A549 (cell line): ENCODE measurements at regions of chr2 and their contacts with region 1.

Region 1: GRCh38 chr2:86440631-86441391 is at the start of gene KDM3A:
- DNase-seq: peak; percentile 93 to 100
- ATAC-seq: peak; percentile 89 to 93
- H3K4me3 ChIP-seq: peak within 1 kb of the TSS; percentile 71
- H3K27ac ChIP-seq: peak within 1 kb of the TSS; percentile 94 to 96
- H3K4me1 ChIP-seq: peaks cover 8% of the 10 kb centered on the region
- CTCF ChIP-seq: no peak
- EP300 ChIP-seq: peak in 1 of 2 experiments; percentile 58; a peak in 1 of 5 replicates
- POLR2A ChIP-seq: no peak
- RAD21 ChIP-seq: no peak; a peak in 2 of 5 replicates
- polyA plus RNA-seq, gene KDM3A: 53.7 and 57.0 TPM in 2 replicates

Region 2: DNA sequence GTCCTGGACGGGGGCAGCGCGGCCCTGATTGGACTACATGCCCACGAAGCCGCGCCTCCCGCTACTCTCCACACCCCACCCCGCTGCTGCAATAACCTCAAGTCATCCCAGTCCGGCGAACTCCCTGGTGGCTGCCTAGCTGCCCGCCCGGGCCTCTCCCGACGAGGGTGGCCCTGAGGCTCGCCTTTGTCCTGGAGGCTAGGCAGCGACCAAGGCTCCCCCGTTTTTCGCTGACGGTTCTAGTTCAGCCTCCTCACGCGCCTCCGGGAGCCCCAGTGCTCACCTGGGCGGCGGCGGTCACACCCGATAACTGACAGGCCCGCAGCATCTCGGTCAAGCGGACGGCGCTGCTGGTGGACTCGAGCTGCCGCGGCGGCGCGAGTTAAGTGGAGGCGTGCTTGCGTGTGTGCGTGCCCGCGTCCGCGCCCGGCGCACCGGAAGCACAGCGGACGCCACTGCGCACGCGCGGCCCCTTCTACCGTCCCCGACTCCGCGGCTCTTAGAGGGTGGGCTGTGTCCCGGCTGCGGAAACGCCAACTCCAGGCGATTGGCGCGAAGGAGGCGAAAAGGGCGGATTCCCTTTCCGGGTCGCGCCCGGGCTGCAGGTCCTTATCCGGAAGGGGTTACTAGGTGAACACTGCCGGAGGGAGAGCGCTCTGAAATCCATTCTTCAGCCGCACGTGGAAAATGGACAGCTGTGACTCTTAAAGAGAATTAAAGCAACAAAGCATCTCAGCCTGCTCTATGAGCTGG is 245.6 kb before region 1 on chr2 and contains the start of gene IMMT:
- CTCF ChIA-PET with region 1: no interaction called
- POLR2A ChIA-PET with region 1: interaction called, 32 read pairs
- DNase-seq: peak; percentile 93 to 99
- ATAC-seq: peak; percentile 92 to 95
- H3K4me3 ChIP-seq: peak within 1 kb of the TSS; percentile 69
- H3K27ac ChIP-seq: peak within 1 kb of the TSS; percentile 93 to 96
- H3K4me1 ChIP-seq: peaks cover 23% of the 10 kb centered on the region
- CTCF ChIP-seq: no peak
- EP300 ChIP-seq: no peak
- POLR2A ChIP-seq: peak; percentile 89
- RAD21 ChIP-seq: no peak
- polyA plus RNA-seq, gene IMMT: 126 and 157 TPM in 2 replicates

Region 3: DNA sequence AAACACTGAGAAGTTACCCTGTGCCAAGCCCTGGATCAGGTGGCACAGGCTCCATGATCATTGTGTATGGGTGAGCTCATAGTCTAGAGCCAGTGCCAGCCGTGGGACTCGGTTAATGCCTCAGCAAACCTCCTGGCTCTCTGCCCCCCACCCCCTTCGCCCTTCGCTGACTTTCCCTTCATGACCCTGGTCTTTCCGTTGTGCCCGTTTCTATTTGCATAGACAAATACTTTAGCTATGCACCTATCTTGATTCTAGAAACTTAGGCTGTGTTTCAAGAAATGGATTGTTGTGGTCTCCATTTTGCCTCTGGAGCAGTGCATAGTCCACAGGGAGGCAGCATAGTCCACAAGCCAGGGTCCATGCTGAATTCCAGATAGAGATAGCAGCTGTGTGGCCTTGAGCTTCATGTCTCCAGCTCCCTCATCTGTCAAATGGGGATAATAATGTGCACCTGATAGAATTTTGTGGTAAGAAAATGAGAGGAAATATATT is 44.5 kb before region 1 on chr2:
- CTCF ChIA-PET with region 1: interaction called, 3 read pairs
- POLR2A ChIA-PET with region 1: interaction called, 25 read pairs
- DNase-seq: peak; percentile 38 to 72
- ATAC-seq: peak; percentile 85 to 94
- H3K4me3 ChIP-seq: no peak overlapping the region
- H3K27ac ChIP-seq: 0 out of 6 replicates have a peak overlapping the region, but pooled peaks of 1 of the 2 experiments have one; percentile 27
- H3K4me1 ChIP-seq: 0 out of 3 replicates have a peak, but pooled peaks cover 3% of the 10 kb centered on the region
- CTCF ChIP-seq: peak; percentile 55
- EP300 ChIP-seq: no peak
- POLR2A ChIP-seq: no peak
- RAD21 ChIP-seq: peak; percentile 71 to 79

Region 4: GRCh38 chr2:86453836-86454235 is 13.0 kb after region 1 on chr2:
- CTCF ChIA-PET with region 1: interaction called, 6 read pairs
- POLR2A ChIA-PET with region 1: interaction called, 43 read pairs
- DNase-seq: no peak
- ATAC-seq: no peak
- H3K4me3 ChIP-seq: no peak overlapping the region
- H3K27ac ChIP-seq: no peak overlapping the region
- H3K4me1 ChIP-seq: no peaks in the 10 kb centered on the region
- CTCF ChIP-seq: no peak
- EP300 ChIP-seq: no peak
- POLR2A ChIP-seq: no peak
- RAD21 ChIP-seq: no peak

Region 5: DNA sequence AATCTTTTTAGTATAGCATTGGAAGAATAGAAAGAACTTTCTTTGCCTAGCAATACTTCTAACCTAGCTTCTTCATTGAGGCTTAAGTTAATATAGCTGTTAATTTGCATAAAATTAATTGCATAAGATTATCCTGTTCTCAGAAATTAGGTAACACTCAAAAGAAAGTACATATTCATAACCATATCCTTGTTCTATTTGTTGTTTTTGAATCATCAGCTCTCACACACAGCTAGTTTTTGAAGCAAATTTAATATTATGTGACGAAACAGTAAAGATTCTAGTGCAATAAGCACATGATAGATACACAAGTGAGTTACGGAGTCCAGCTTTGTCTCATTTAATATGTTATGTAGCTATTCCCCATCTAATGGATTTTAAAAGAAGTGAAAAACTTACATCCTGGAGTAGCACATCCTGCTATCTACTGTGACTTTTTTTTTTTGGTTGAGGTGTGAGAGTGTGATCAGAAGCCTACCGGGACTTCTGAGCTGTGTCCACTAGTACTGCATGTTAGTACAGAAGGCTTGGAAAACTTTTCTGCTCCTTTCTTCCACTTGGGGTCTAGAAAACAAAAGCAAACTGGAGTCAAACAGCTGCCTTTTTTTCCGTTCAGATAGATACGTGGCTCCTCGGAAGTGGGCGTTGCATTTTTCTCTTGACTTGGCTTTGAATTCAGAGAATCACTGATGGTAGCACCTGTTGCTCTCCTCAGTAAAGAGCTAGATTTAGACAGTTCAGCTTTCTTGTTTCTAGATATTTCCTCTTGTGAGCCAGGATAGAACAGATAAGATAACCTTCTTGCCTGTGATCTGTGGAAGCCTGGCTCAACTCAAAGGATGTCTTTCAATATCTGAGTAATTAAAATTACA is 27.6 kb after region 1 on chr2:
- CTCF ChIA-PET with region 1: interaction called, 3 read pairs
- POLR2A ChIA-PET with region 1: interaction called, 15 read pairs
- DNase-seq: no peak
- ATAC-seq: no peak
- H3K4me3 ChIP-seq: no peak overlapping the region
- H3K27ac ChIP-seq: no peak overlapping the region
- H3K4me1 ChIP-seq: no peaks in the 10 kb centered on the region
- CTCF ChIP-seq: no peak
- EP300 ChIP-seq: no peak
- POLR2A ChIP-seq: no peak
- RAD21 ChIP-seq: no peak

Region 6: DNA sequence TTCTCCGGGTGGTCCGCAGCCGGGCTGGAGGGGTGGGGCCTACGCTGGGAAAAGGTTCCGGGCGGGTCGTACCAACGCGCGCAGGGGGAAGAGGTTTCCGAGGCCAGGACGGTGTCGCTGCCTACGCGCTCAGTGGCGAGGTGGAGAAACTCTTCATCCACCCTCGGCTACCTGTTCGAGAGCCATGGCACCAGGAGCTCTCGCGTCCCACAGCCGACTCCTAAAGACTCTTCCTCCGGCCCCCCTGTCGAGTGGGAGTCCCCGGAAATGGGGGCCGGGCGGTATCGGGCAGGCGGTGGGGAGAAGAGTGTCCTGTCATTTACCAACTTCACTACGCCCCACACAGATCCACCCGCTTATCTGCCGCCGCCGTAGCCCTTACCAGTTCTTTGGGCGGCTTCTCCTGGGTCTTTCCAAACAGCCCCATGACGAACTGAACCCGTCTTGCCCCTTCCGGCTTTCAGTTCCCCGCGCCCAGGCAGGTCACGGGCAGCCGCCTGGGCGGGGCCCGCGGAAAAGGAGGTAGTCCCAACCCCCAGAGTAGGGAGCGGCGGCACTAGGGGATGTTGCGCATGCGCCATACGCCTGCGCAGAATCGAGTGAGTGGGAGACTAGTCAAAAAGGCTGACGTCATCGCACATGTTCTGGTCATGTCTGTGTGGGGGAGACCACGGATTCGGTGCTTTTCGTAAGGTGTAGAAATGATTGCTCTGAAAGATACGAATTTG is 122.3 kb after region 1 on chr2 and contains the start of gene CHMP3:
- CTCF ChIA-PET with region 1: no interaction called
- POLR2A ChIA-PET with region 1: interaction called, 14 read pairs
- DNase-seq: peak; percentile 98
- ATAC-seq: peak; percentile 92 to 95
- H3K4me3 ChIP-seq: peak within 1 kb of the TSS; percentile 56
- H3K27ac ChIP-seq: peak within 1 kb of the TSS; percentile 94 to 96
- H3K4me1 ChIP-seq: peaks cover 29% of the 10 kb centered on the region
- CTCF ChIP-seq: no peak
- EP300 ChIP-seq: no peak
- POLR2A ChIP-seq: peak; percentile 57
- RAD21 ChIP-seq: no peak; a peak in 1 of 5 replicates
- polyA plus RNA-seq, gene CHMP3: 175 and 246 TPM in 2 replicates

Region 7: GRCh38 chr2:86623651-86624541 is 183.1 kb after region 1 on chr2 and contains the start of gene RNF103:
- CTCF ChIA-PET with region 1: no interaction called
- POLR2A ChIA-PET with region 1: interaction called, 24 read pairs
- DNase-seq: peak; percentile 89 to 96
- ATAC-seq: peak; percentile 88 to 92
- H3K4me3 ChIP-seq: peak within 1 kb of the TSS; percentile 84
- H3K27ac ChIP-seq: peak within 1 kb of the TSS; percentile 89 to 97
- H3K4me1 ChIP-seq: peaks cover 30% of the 10 kb centered on the region
- CTCF ChIP-seq: no peak
- EP300 ChIP-seq: no peak
- POLR2A ChIP-seq: peak; percentile 91
- RAD21 ChIP-seq: no peak
- polyA plus RNA-seq, gene RNF103: 30.0 and 38.3 TPM in 2 replicates